Right ventricle myocardium inferior (tissue), 1 donor: ENCODE measurements at regions of chr15 and their contacts with region 1.

Region 1: GRCh38 chr15:67521029-67521811 is at the start of gene C15orf61:
- DNase-seq: peak; percentile 93
- ATAC-seq: peak; percentile 94
- total RNA-seq, gene C15orf61: 11.9 TPM

Region 2: DNA sequence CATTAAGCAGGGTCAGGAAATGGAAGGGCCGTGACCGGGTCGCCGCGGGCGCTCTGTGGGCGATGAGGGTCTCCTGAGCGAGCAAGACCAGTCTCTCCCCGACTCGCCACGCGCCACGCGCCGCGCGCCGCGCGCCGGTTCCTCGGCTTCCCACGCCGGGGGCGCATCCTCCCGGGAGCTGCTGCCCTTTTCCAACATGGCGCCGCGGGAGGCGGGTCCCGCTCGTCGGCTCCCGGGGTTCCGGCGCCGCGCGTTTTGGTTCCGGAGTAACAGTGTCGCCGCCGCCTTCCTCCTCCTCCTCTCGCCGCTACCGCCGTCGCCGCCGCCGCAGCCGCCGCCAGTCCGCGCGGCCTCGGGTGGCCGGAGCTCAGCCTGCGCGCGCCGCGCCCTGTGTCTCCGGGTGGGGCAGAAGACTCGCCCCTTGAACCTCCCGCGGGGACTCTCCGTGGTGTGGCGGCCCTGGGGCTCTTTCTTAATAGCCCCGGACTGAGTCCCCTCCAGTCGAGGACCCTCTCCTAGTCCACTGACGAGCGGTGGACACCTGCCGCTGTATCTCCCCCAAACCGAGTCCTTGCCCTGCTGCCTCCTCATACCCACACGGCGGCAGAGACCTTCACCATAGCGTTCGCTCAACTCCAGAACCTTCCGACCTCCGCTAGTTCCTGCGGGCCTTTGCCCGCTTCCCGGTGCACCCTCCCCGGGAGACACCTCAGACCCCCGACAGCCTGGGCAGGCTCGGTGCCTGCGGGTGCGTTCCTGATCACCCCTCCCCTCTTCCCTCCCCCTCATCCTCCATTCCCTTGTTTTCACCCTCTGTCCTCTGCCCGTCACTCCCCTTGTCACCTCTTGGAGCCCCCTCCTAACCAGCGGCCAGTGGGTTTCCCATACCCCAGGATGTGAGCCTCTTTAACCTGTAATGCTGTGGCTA is 21.5 kb after region 1 on chr15 and contains the start of gene MAP2K5:
- intact Hi-C with region 1: loop called (anchors 2 kb)
- DNase-seq: peak; percentile 95
- ATAC-seq: peak; percentile 93
- total RNA-seq, gene MAP2K5: 19.0 TPM

Region 3: GRCh38 chr15:67564608-67565345 is 43.6 kb after region 1 on chr15:
- intact Hi-C with region 1: no loop called
- DNase-seq: no peak
- ATAC-seq: no peak

Region 4: GRCh38 chr15:68177742-68178141 is 656.5 kb after region 1 on chr15:
- intact Hi-C with region 1: loop called (anchors 10 kb)
- DNase-seq: no peak
- ATAC-seq: no peak